PC-9 (cell line): ENCODE measurements at regions of chr4 and their contacts with region 1.

Region 1: DNA sequence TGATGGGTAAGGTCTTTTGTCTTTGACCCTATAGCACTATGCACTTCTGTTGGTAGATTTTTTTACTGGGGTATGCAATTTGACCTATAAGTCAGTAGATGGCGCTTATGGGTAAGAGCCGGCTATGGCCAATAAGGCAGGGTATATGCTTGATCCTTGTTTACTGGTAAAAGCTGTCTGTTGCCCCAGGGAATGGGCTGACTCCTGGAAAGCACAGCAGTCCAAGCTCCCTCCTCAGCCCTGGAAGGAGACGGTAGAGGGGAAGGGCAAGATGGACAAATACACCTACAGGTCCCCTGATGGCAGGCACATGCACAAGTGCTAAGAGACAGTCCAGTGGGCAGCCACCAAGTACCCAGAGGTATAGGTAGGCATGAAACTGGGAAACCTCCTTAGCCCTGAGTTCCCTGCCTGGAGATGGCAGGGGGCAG is 63.7 kb downstream of the ADAMTS3 start:
- DNase-seq: peak; percentile 2 to 33
- H3K4me3 ChIP-seq: no peak overlapping the region
- H3K27ac ChIP-seq: no peak overlapping the region
- H3K4me1 ChIP-seq: no peaks in the 10 kb centered on the region
- H3K27me3 ChIP-seq: no peaks in the 10 kb centered on the region
- CTCF ChIP-seq: peak; percentile 72

Region 2: DNA sequence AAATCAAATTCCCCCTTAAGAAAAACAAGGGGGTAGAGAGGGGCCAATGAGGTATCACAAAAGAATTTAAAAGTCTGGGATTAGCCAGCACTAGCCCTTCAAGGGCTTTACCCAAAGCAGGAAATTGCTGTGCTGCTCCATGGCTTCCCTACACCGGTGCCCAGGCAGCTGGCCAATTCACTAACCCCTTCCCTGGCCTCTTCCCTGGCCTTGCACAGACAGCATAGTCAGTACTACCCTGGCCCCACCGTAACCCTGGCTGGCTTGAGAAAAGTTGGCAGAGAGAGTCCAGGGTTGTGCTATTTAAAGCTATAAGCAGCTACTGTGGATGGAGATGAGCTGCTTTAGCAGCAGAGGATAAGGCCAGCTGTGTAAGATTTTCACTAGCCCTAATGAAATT is 20.6 kb after region 1 on chr4:
- CTCF ChIA-PET with region 1: no interaction called
- POLR2A ChIA-PET with region 1: no interaction called
- intact Hi-C with region 1: no loop called
- DNase-seq: no peak
- H3K4me3 ChIP-seq: no peak overlapping the region
- H3K27ac ChIP-seq: no peak overlapping the region
- H3K4me1 ChIP-seq: no peaks in the 10 kb centered on the region
- H3K27me3 ChIP-seq: no peaks in the 10 kb centered on the region
- CTCF ChIP-seq: no peak

Region 3: GRCh38 chr4:72701987-72702819 is 196.9 kb after region 1 on chr4:
- CTCF ChIA-PET with region 1: no interaction called
- POLR2A ChIA-PET with region 1: no interaction called
- intact Hi-C with region 1: loop called (anchors 5 kb)
- DNase-seq: no peak
- H3K4me3 ChIP-seq: peak overlapping the region; percentile 43; the same call in 1 of the 2 replicates
- H3K27ac ChIP-seq: no peak overlapping the region
- H3K4me1 ChIP-seq: no peaks in the 10 kb centered on the region
- H3K27me3 ChIP-seq: no peaks in the 10 kb centered on the region
- CTCF ChIP-seq: peak; percentile 65

Region 4: GRCh38 chr4:72875138-72875537 is 369.8 kb after region 1 on chr4:
- CTCF ChIA-PET with region 1: no interaction called
- POLR2A ChIA-PET with region 1: no interaction called
- intact Hi-C with region 1: loop called (anchors 10 kb)
- DNase-seq: no peak
- H3K4me3 ChIP-seq: no peak overlapping the region
- H3K27ac ChIP-seq: no peak overlapping the region
- H3K4me1 ChIP-seq: no peaks in the 10 kb centered on the region
- H3K27me3 ChIP-seq: no peaks in the 10 kb centered on the region
- CTCF ChIP-seq: no peak